ENCODE measurements at regions of chr15 and their contacts with region 1.

Region 1: DNA sequence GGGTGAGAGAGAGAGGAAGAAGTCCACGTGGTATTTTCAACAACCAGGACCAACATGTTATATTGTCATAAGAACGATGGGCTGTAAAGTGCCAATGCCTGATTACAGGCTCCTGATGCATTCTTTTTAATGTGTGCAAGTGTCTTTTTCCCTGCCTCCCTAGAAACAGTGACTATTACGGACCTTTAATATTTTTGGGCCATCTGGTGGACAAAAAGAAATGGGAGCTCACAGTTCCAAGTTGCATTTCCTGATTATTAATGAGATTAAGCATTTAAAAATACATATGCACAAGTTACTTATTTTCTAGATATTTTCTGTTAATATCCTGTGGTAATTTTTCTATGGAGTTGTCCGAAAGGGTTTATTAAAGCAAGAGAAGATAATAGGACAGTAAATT is 530.2 kb downstream of the NR2F2 start:
- DNase-seq: no peak
- ATAC-seq: no peak
- H3K4me3 ChIP-seq: no peak overlapping the region
- H3K27ac ChIP-seq: no peak overlapping the region
- H3K4me1 ChIP-seq: no peaks in the 10 kb centered on the region
- H3K27me3 ChIP-seq: no peaks in the 10 kb centered on the region
- CTCF ChIP-seq: peak in 4 of 9 donors; percentile 19 to 28 (median 22)

Region 2: GRCh38 chr15:96789999-96790398 is 70.7 kb before region 1 on chr15:
- intact Hi-C with region 1: loop called in 1 of 10 experiments (anchors 2 kb)
- DNase-seq: no peak
- ATAC-seq: no peak
- H3K4me3 ChIP-seq: no peak overlapping the region
- H3K27ac ChIP-seq: no peak overlapping the region
- H3K4me1 ChIP-seq: no peaks in the 10 kb centered on the region
- H3K27me3 ChIP-seq: peaks cover 0 to 8% (median 0%) of the 10 kb centered on the region in 7 donors
- CTCF ChIP-seq: no peak

Region 3: DNA sequence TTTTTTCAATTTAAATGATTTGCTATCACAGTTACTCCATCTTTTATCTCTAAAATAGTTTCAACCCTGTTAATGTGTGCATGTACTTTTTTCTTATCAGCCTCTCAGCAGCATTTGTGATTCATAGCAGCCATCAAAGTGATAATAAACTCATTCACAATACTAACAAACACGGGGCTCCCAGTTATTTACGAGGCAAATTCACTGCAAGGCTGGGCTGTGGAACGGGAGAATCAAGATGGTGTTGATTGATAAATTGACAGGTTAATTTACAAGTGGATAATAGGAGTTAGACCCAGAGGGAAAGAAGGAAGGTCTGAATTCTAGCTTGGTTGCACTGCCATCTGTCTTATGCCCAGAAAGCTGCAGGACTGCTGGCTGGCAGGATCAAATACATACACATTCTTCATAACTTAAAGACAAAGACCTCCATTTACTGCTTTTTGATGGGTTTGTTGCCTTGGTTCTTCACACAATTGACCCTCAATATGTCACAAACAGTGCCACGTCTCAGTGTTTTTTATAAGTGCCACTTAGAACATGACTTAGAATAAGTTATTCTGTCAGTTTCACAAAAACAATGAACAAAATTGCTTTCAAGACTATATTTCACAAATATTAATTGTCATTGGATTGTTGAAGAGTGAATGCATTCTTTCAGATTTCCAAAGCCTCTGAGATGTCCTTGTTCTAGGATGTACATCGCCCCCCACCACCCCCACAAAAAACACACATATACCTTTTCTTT is 32.6 kb after region 1 on chr15:
- intact Hi-C with region 1: no loop called
- DNase-seq: no peak
- ATAC-seq: no peak
- H3K4me3 ChIP-seq: no peak overlapping the region
- H3K27ac ChIP-seq: no peak overlapping the region
- H3K4me1 ChIP-seq: peaks cover 0 to 10% (median 0%) of the 10 kb centered on the region in 9 donors
- H3K27me3 ChIP-seq: peaks cover 0 to 9% (median 0%) of the 10 kb centered on the region in 7 donors
- CTCF ChIP-seq: peak in 8 of 9 donors; percentile 8 to 66 (median 52)

Region 4: DNA sequence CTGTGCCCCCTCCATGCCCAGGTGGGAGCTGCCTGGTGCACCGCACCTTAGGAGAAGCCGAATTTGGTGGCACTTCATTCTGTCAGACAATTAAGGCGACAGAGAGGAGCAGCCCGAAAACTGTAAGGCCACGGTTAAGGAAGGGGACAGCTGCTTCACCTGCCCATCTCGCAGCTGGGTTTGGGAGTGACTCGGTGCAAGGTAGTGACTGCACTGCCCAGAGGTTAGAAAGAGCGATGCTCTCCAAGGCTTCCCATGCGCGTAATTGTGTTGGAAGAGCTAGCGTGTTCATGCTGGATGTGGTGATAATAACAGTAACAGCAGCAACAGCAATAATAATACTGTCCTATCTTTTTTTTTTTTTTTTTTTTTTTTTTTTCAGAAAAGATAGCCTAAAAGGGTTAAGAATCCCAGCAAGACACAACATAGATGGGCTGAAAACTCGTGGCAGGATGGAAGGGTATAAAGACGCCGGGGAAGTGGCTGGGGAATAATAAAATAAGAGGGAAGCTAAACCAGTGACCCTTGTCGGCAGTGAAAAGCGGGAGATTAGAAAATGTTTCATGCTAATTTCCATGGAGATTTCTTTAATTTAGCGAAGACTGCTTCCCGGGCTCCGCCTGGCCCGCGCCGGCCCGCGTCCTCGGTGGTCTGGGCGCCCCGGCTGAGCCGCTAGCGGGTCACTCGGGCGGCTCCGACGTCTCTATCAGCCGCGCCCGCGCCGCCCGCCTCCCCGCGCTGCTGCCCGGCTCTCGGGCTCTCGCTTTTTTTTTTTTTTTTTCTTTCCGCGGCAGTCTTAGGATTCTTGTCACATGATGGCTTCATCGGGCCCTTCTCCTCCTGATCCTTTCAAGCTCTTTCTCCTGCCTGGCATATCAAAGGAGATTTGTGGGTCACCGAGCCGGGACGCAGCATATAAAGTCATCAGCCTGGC is 86.8 kb after region 1 on chr15:
- intact Hi-C with region 1: no loop called
- DNase-seq: no peak
- ATAC-seq: no peak
- H3K4me3 ChIP-seq: peak overlapping the region in 5 of 10 donors; percentile 14 to 41 (median 30)
- H3K27ac ChIP-seq: no peak overlapping the region
- H3K4me1 ChIP-seq: no peaks in the 10 kb centered on the region
- H3K27me3 ChIP-seq: peaks cover 0 to 58% (median 44%) of the 10 kb centered on the region in 7 donors
- CTCF ChIP-seq: no peak